ENCODE measurements at regions of chr18 and their contacts with region 1.

Region 1: DNA sequence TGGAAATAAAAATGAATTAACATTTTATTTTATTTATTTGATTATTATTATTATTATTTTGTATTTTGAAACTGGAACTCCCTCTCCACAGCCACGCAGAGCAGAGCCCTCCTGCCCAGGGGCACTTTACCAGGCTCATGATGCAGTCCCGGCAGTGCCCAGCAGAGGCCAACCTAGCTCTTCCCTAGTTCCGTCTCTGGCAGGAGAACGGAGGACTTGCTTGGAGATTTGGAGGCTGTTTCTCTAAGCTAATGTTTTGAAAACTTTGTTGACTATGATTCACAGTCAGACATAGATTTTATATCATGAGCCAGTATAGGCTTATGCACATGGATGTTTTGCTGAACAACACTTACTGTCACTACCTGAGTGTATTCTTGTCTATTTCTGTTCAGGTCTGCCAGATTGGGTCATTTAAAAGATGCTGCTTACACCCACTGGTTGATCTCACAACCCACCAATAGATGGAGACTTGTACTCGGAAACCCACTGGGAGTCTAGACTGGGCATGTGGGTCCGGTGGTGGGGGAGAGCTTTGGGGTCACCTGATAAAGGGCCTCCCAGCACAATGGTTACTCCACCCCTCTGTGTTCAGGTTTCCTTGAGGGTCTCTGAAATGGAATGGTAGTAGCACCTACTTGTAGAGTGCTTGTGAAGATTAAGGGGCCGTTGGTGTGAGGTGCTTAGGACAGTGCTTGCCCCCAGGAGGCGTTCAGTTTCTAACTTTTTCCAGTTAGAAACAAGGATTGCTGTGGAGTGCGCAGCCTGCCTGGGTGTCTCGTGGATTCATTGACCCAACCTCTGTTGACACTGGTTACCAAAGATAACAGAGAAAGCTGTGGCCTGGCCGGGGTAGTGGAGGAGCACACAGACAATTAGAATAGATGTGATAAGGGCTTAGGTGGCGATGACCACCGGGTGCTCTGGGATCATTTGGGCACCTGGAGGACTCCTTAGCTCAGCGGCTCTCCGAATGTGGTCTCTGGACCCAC is 177.3 kb downstream of the HAUS1 start:
- DNase-seq: peak; percentile 55
- ATAC-seq: peak; percentile 93
- H3K4me3 ChIP-seq: no peak overlapping the region
- H3K27ac ChIP-seq: no peak overlapping the region
- H3K4me1 ChIP-seq: no peaks in the 10 kb centered on the region
- H3K27me3 ChIP-seq: no peaks in the 10 kb centered on the region
- CTCF ChIP-seq: peak; percentile 84

Region 2: DNA sequence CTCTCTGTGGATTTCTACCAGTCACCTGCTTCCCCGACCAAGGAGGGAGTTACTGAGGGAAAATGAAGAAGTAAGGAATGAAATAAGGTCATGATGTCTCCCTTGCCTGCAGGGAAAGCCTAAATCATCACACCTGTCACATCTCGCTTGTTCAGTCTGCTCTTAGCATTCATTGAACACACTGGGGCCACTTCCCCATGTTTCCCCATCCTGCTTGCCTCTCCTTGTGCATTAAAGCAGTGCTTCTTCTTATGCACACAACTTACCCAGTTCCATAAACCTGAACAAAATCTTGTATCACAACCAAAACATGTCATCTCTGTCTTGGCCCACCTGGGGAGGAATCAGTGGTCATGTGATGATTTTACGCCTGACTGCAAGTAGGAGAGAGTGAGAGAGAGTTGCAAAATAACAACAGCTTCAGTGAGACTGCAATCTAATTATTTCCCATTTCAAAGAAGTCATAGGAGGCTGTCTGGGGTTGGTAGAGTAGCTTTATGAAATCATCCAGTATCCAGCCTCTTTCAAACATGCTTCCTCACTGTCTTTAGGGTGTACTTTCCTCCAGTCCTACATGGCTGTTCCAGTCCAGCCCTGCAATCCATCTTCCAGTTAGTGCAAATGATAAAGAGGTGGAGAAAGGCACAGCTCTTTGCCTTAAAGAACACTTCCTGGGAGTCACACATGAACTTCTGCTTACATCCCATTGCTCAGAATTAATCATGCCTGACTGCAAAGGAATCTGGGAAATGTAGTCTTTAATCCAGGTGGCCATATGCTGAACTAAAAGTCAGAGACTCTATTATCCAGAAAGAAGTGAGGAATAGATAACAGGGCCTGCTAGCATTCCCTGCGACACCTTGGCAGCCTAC is 42.8 kb after region 1 on chr18:
- CTCF ChIA-PET with region 1: no interaction called
- POLR2A ChIA-PET with region 1: no interaction called
- in situ Hi-C with region 1: no loop called
- intact Hi-C with region 1: no loop called
- DNase-seq: peak; percentile 8
- ATAC-seq: no peak
- H3K4me3 ChIP-seq: no peak overlapping the region
- H3K27ac ChIP-seq: no peak overlapping the region
- H3K4me1 ChIP-seq: no peaks in the 10 kb centered on the region
- H3K27me3 ChIP-seq: no peaks in the 10 kb centered on the region
- CTCF ChIP-seq: no peak

Region 3: DNA sequence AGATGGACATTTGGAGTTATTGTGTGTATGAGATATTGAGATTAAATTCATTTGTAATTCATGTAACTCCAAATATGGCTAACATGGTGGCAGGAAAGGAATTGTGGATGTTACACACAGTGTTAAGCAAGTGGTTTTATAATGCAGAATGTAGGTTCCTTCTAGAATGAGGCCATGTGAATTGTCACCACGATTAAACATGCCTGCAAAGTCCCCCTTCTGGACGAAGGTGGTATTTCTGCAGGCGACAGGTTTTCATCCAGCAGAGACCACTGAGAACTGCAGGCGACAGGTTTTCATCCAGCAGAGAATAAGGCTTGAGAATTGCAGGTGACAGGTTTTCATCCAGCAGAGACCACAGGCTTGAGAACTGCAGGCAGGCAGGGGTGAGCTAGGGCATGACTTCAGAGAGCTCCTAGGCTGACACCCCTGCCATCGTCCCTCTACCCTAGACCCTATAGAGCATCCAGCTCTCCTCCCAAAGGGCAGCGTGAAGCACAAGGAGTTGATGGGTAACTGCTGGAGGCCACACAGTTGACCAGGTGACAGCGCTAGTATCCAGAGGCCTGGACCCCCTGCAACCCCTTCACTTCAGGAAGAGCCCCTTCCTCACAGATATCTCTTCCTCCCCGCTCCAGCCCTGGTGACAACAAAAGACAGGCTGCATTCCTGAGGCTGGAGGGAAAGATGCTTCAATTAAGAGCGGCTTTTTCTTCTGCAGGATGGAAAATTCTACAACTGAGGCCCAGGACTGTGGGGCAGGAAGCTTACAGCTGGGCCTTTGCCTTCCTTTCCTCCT is 199.8 kb after region 1 on chr18:
- CTCF ChIA-PET with region 1: interaction called, 7 read pairs
- POLR2A ChIA-PET with region 1: no interaction called
- in situ Hi-C with region 1: no loop called
- intact Hi-C with region 1: loop called (anchors 10 kb)
- DNase-seq: no peak
- ATAC-seq: peak; percentile 74; the same call in 1 of the 2 replicates
- H3K4me3 ChIP-seq: no peak overlapping the region
- H3K27ac ChIP-seq: no peak overlapping the region
- H3K4me1 ChIP-seq: no peaks in the 10 kb centered on the region
- H3K27me3 ChIP-seq: no peaks in the 10 kb centered on the region
- CTCF ChIP-seq: peak; percentile 62

Region 4: GRCh38 chr18:46506974-46507373 is 225.5 kb after region 1 on chr18:
- CTCF ChIA-PET with region 1: no interaction called
- POLR2A ChIA-PET with region 1: no interaction called
- in situ Hi-C with region 1: no loop called
- intact Hi-C with region 1: loop called (anchors 5 kb)
- DNase-seq: no peak
- ATAC-seq: no peak
- H3K4me3 ChIP-seq: no peak overlapping the region
- H3K27ac ChIP-seq: no peak overlapping the region
- H3K4me1 ChIP-seq: no peaks in the 10 kb centered on the region
- H3K27me3 ChIP-seq: no peaks in the 10 kb centered on the region
- CTCF ChIP-seq: no peak

Region 5: DNA sequence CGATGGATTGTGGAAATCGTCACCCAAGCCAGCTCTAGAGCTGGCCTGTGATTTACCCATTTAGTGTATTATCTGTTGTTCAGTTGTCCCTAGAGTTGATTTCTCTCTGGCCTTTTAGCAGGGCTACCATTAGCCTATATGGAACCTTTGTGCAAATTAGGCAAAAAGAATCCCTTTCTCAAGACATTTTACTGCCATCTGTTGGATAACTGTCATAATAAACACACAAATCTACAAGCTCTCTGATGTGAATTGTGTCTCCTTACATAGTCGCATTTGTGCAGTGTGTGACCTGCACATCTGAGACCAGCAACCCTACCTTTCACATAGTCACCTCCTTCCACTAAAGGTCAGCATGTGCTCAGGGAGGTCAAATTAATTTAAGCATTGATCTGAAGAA is 341.5 kb after region 1 on chr18:
- CTCF ChIA-PET with region 1: interaction called, 10 read pairs
- POLR2A ChIA-PET with region 1: no interaction called
- in situ Hi-C with region 1: no loop called
- intact Hi-C with region 1: no loop called
- DNase-seq: no peak
- ATAC-seq: no peak
- H3K4me3 ChIP-seq: no peak overlapping the region
- H3K27ac ChIP-seq: no peak overlapping the region
- H3K4me1 ChIP-seq: no peaks in the 10 kb centered on the region
- H3K27me3 ChIP-seq: no peaks in the 10 kb centered on the region
- CTCF ChIP-seq: peak; percentile 15; the same call in 1 of the 2 replicates